ENCODE measurements at regions of chr17 and their contacts with region 1.

Region 1: DNA sequence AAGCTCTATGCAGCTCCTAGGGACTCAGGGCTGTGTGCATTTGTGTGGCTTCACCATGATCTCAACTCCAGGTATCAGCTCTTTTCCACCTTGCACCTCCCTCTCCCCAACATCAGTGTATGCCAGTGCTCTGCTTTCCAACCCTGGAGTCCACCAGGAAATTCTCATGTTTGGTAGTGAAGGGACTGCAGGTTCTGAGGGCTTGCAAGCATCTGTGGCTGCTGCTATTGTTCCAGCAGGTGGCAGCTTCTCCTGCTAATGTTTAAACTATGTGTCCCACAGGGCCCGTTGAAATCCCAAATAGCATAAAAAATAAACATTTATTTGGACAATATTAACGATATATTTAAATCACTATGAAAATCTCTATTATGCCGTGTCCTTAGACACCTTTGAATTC is 82.0 kb downstream of the RGS9 start:
- DNase-seq: no peak
- ATAC-seq: no peak
- H3K4me3 ChIP-seq: no peak overlapping the region
- H3K4me3 Mint-ChIP-seq: no peak overlapping the region
- H3K27ac ChIP-seq: no peak overlapping the region
- H3K27ac Mint-ChIP-seq: no peak overlapping the region
- H3K4me1 ChIP-seq: no peaks in the 10 kb centered on the region
- H3K4me1 Mint-ChIP-seq: no peaks in the 10 kb centered on the region
- H3K27me3 ChIP-seq: no peaks in the 10 kb centered on the region
- H3K27me3 Mint-ChIP-seq: peaks cover 16% of the 10 kb centered on the region
- CTCF ChIP-seq: no peak

Region 2: DNA sequence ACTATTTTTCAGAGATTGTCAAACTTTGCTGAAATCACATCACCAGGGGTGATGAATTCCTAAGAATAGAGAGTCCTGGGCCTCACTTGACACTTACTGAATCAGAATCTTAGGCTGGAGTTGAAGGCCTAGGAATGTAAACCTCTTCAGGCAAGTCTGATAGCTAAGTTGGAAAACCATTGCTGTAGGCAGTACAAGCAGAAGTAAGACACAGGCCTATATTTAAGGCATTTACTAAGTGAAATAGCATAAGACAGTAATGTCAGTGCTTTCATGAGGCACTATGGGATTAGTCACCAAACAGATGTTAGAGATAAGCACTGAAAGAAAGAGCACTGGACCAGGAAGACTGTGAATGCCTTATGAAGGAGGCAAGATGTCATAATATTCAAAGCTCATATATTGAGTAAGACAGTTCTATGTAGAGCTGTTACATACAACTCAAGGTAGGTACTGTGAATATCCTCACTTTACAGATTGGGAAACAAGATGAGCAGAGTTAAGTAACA is 1647.3 kb before region 1 on chr17:
- CTCF ChIA-PET with region 1: no interaction called
- POLR2A ChIA-PET with region 1: no interaction called
- intact Hi-C with region 1: loop called in 1 of 2 experiments (anchors 10 kb)
- DNase-seq: no peak
- ATAC-seq: no peak
- H3K4me3 ChIP-seq: no peak overlapping the region
- H3K4me3 Mint-ChIP-seq: no peak overlapping the region
- H3K27ac ChIP-seq: no peak overlapping the region
- H3K27ac Mint-ChIP-seq: peak overlapping the region; percentile 11
- H3K4me1 ChIP-seq: peaks cover 5% of the 10 kb centered on the region
- H3K4me1 Mint-ChIP-seq: peaks cover 48% of the 10 kb centered on the region
- H3K27me3 ChIP-seq: no peaks in the 10 kb centered on the region
- H3K27me3 Mint-ChIP-seq: no peaks in the 10 kb centered on the region
- CTCF ChIP-seq: no peak

Measured in CD8-positive, alpha-beta T cell (primary cell).